ENCODE measurements at regions of chr5 and their contacts with region 1.

Region 1: GRCh38 chr5:173707392-173707791 is 90.9 kb upstream of the BOD1 start:
- DNase-seq: peak; percentile 91
- H3K4me3 ChIP-seq: peak overlapping the region; percentile 44
- H3K27ac ChIP-seq: peak overlapping the region; percentile 75
- H3K4me1 ChIP-seq: peaks cover 60% of the 10 kb centered on the region
- CTCF ChIP-seq: no peak

Region 2: DNA sequence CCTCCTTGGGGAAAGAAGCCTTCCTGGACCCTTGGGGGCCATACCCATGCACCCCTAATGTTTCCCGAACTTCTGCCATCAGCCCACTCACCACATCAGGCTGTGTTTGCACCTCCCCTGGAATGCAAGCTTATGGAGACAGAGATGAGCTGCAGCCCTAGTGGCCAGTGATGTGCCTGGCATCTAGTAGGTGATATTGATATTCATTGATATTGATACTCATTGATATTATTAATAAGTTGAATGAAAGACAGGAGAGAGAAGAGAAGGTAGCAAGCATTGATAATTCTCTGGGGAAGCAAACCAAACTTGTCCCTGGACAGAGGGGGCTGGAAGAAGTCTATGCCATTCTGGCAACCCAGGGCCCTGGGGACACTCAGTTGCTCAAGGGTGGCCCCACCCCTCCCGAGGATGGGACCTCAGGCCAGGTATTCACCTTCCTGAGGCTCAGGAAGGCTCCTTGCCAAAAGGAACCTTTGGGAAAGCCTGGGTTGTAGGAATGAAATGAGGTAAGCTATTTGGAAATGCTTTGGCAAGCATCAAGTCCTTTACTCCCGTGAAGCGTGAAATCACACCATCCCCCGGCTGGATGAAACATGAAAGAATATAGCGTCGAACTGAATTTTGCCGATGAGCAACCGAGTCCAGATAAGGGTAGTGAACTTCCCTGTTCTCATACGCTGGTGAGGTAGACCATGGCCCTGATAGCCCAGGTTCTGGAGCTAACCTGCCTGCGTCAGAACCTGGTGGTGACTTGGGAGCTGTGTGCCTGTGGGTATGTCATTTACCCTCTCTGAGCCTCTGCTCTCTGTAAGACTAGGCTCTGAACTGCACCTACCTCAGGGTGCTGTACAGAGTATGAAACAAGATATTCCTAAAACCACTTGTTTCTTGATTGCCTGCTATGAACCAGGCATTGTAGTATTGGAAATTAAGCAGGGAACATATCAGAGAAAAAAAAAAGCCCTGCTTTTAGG is 14.2 kb after region 1 on chr5:
- CTCF ChIA-PET with region 1: interaction called, 6 read pairs
- POLR2A ChIA-PET with region 1: interaction called, 17 read pairs
- intact Hi-C with region 1: no loop called
- DNase-seq: no peak
- H3K4me3 ChIP-seq: no peak overlapping the region
- H3K27ac ChIP-seq: no peak overlapping the region
- H3K4me1 ChIP-seq: peaks cover 50% of the 10 kb centered on the region
- CTCF ChIP-seq: peak; percentile 63

Region 3: GRCh38 chr5:174148721-174149120 is 441.3 kb after region 1 on chr5:
- CTCF ChIA-PET with region 1: no interaction called
- POLR2A ChIA-PET with region 1: no interaction called
- intact Hi-C with region 1: no loop called
- DNase-seq: no peak
- H3K4me3 ChIP-seq: no peak overlapping the region
- H3K27ac ChIP-seq: no peak overlapping the region
- H3K4me1 ChIP-seq: no peaks in the 10 kb centered on the region
- CTCF ChIP-seq: no peak

Region 4: GRCh38 chr5:174764262-174764661 is 1056.9 kb after region 1 on chr5:
- CTCF ChIA-PET with region 1: no interaction called
- POLR2A ChIA-PET with region 1: no interaction called
- intact Hi-C with region 1: no loop called
- DNase-seq: no peak
- H3K4me3 ChIP-seq: no peak overlapping the region
- H3K27ac ChIP-seq: no peak overlapping the region
- H3K4me1 ChIP-seq: no peaks in the 10 kb centered on the region
- CTCF ChIP-seq: no peak